Mammary epithelial cell (primary cell): ENCODE measurements at regions of chr10 and their contacts with region 1.

Region 1: GRCh38 chr10:76547352-76547972 is 1090.1 kb downstream of the KCNMA1 start:
- DNase-seq: peak; percentile 60
- H3K4me3 ChIP-seq: no peak overlapping the region
- H3K27ac ChIP-seq: no peak overlapping the region
- H3K4me1 ChIP-seq: peaks cover 11% of the 10 kb centered on the region
- H3K27me3 ChIP-seq: no peaks in the 10 kb centered on the region
- CTCF ChIP-seq: peak; percentile 76 to 77

Region 2: GRCh38 chr10:76106611-76107010 is 440.9 kb before region 1 on chr10:
- CTCF ChIA-PET with region 1: no interaction called
- dilution Hi-C with region 1: no loop called
- in situ Hi-C with region 1: no loop called
- intact Hi-C with region 1: loop called (anchors 1 kb)
- DNase-seq: no peak
- H3K4me3 ChIP-seq: no peak overlapping the region
- H3K27ac ChIP-seq: no peak overlapping the region
- H3K4me1 ChIP-seq: peaks cover 10% of the 10 kb centered on the region
- H3K27me3 ChIP-seq: no peaks in the 10 kb centered on the region
- CTCF ChIP-seq: no peak

Region 3: GRCh38 chr10:76311752-76312636 is 235.5 kb before region 1 on chr10:
- CTCF ChIA-PET with region 1: no interaction called
- dilution Hi-C with region 1: no loop called
- in situ Hi-C with region 1: loop called in 1 of 2 experiments (anchors 25 kb)
- intact Hi-C with region 1: loop called (anchors 1 kb)
- DNase-seq: peak; percentile 16
- H3K4me3 ChIP-seq: no peak overlapping the region
- H3K27ac ChIP-seq: no peak overlapping the region
- H3K4me1 ChIP-seq: no peaks in the 10 kb centered on the region
- H3K27me3 ChIP-seq: no peaks in the 10 kb centered on the region
- CTCF ChIP-seq: peak; percentile 66 to 69

Region 4: GRCh38 chr10:76984559-76985443 is 437.3 kb after region 1 on chr10:
- CTCF ChIA-PET with region 1: no interaction called
- dilution Hi-C with region 1: no loop called
- in situ Hi-C with region 1: loop called in 1 of 2 experiments (anchors 25 kb)
- intact Hi-C with region 1: loop called (anchors 2 kb)
- DNase-seq: peak; percentile 45
- H3K4me3 ChIP-seq: no peak overlapping the region
- H3K27ac ChIP-seq: no peak overlapping the region
- H3K4me1 ChIP-seq: no peaks in the 10 kb centered on the region
- H3K27me3 ChIP-seq: no peaks in the 10 kb centered on the region
- CTCF ChIP-seq: peak; percentile 90 to 91